IMR-90 (cell line): ENCODE measurements at regions of chr5 and their contacts with region 1.

Region 1: DNA sequence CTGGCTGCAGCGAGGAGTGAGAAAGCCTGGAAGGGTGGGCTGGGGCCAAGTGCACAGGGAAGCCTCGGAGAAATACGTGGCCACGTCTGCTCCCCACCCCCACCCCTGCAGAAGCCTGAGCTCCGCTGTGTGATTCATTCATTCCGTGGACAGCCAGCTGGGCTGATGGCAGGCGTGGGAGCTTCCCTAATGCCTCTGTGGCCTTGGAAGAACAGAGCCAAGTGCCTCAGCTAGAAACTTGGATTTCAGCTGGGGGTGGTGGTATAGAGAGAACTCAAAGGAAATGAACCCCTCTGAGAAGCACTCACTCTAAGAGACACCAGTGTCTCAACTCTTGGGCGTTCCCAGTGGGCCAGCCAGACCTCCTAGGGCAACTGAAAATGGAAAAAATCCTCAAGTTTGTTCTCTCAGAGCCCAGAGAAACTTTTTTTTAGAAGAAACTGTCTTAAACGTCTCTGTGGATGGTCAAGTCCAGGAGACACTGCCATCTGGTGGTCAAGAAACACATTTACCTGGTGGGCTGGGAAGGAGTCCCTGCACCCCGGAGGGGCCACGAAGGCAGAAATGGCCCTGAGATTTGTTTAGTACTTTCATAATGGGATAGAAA is 18.0 kb downstream of the ATOX1 start:
- DNase-seq: peak; percentile 96
- ATAC-seq: peak; percentile 61
- H3K4me3 ChIP-seq: no peak overlapping the region
- H3K27ac ChIP-seq: peak overlapping the region; percentile 100
- H3K4me1 ChIP-seq: peaks cover 23% of the 10 kb centered on the region
- H3K27me3 ChIP-seq: no peaks in the 10 kb centered on the region
- CTCF ChIP-seq: peak; percentile 86
- POLR2A ChIP-seq: peak; percentile 68
- RAD21 ChIP-seq: peak; percentile 81

Region 2: DNA sequence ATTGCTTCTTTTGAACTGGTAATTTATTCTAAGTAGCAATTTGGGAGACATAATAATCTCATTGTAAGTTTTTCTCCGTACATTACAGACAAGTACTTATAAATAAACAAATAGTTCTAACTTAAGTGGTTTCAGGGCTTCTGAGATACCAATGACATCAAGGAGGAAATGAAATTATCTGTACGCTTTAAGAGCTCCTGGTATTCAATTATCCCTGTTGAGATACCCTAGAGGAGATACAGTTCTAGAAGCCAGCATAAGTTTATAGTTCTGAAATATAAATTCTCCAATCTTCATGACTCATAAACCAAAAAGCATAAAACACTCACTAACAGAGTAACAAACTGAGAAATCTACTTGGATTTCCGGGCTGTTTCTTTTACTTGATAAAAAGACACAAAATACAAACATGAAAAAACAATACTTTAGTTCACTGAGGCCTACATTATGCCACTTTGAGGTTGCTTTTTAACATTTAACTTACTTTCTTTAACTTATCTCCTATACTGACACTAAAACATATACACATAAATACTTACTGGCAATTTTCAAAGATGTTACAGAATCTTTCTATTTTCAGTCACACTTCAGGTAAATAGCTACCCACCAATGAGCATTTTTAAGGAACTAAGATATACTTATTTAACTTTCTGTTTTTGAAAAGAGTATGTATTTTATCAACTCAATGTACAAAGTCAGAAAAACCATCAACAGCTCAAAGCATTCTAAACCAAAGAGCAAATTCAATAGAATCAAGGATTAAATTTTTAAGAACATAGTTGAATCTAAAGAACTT is 989.1 kb before region 1 on chr5:
- CTCF ChIA-PET with region 1: no interaction called
- POLR2A ChIA-PET with region 1: no interaction called
- dilution Hi-C with region 1: no loop called
- in situ Hi-C with region 1: no loop called
- intact Hi-C with region 1: no loop called
- DNase-seq: peak; percentile 40
- ATAC-seq: peak; percentile 80
- H3K4me3 ChIP-seq: no peak overlapping the region
- H3K27ac ChIP-seq: peak overlapping the region; percentile 62; the same call in 1 of the 2 replicates
- H3K4me1 ChIP-seq: no peaks in the 10 kb centered on the region; the same call in 1 of the 2 replicates
- H3K27me3 ChIP-seq: no peaks in the 10 kb centered on the region
- CTCF ChIP-seq: no peak
- POLR2A ChIP-seq: no peak
- RAD21 ChIP-seq: no peak

Region 3: GRCh38 chr5:151414536-151414935 is 325.9 kb before region 1 on chr5:
- CTCF ChIA-PET with region 1: no interaction called
- POLR2A ChIA-PET with region 1: no interaction called
- dilution Hi-C with region 1: no loop called
- in situ Hi-C with region 1: no loop called
- intact Hi-C with region 1: no loop called
- DNase-seq: no peak
- ATAC-seq: no peak
- H3K4me3 ChIP-seq: no peak overlapping the region
- H3K27ac ChIP-seq: no peak overlapping the region
- H3K4me1 ChIP-seq: no peaks in the 10 kb centered on the region
- H3K27me3 ChIP-seq: peaks cover 3% of the 10 kb centered on the region; the same call in 1 of the 2 replicates
- CTCF ChIP-seq: no peak
- POLR2A ChIP-seq: no peak
- RAD21 ChIP-seq: no peak

Region 4: GRCh38 chr5:151447174-151448037 is 293.0 kb before region 1 on chr5 and contains the start of gene SLC36A1:
- CTCF ChIA-PET with region 1: no interaction called
- POLR2A ChIA-PET with region 1: no interaction called
- dilution Hi-C with region 1: no loop called
- in situ Hi-C with region 1: loop called (anchors 5 kb)
- intact Hi-C with region 1: loop called (anchors 1 kb)
- DNase-seq: peak; percentile 86
- ATAC-seq: peak; percentile 90
- H3K4me3 ChIP-seq: peak within 1 kb of the TSS; percentile 74
- H3K27ac ChIP-seq: peak within 1 kb of the TSS; percentile 50
- H3K4me1 ChIP-seq: peaks cover 12% of the 10 kb centered on the region
- H3K27me3 ChIP-seq: peaks cover 2% of the 10 kb centered on the region; the same call in 1 of the 2 replicates
- CTCF ChIP-seq: peak; percentile 93
- POLR2A ChIP-seq: peak; percentile 41; the same call in 1 of the 2 replicates
- RAD21 ChIP-seq: peak; percentile 90
- total RNA-seq, gene SLC36A1: 5.3 and 5.7 TPM in 2 replicates

Region 5: DNA sequence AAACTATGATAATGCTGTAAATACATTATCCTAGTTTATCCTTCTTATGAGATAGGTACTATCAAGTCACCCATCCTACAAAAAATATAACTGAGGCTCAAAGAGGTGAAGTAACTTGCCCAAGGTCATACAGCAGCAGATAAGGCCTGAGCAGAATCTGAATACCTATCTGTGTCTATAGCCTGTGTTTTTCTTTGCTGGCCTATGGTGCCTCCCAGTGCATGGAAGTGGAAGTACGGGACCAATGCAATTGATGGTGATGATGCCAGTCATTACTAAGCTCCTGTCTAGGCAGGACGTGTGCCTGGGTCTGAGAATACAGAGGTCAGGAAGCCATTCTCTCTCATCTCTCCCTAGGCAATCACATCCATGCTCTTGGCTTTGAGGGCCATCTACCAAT is 217.1 kb before region 1 on chr5:
- CTCF ChIA-PET with region 1: no interaction called
- POLR2A ChIA-PET with region 1: no interaction called
- dilution Hi-C with region 1: no loop called
- in situ Hi-C with region 1: no loop called
- intact Hi-C with region 1: loop called (anchors 5 kb)
- DNase-seq: peak; percentile 55
- ATAC-seq: peak; percentile 93
- H3K4me3 ChIP-seq: no peak overlapping the region
- H3K27ac ChIP-seq: no peak overlapping the region
- H3K4me1 ChIP-seq: no peaks in the 10 kb centered on the region
- H3K27me3 ChIP-seq: peaks cover 4% of the 10 kb centered on the region; the same call in 1 of the 2 replicates
- CTCF ChIP-seq: peak; percentile 67
- POLR2A ChIP-seq: no peak
- RAD21 ChIP-seq: peak; percentile 81

Region 6: DNA sequence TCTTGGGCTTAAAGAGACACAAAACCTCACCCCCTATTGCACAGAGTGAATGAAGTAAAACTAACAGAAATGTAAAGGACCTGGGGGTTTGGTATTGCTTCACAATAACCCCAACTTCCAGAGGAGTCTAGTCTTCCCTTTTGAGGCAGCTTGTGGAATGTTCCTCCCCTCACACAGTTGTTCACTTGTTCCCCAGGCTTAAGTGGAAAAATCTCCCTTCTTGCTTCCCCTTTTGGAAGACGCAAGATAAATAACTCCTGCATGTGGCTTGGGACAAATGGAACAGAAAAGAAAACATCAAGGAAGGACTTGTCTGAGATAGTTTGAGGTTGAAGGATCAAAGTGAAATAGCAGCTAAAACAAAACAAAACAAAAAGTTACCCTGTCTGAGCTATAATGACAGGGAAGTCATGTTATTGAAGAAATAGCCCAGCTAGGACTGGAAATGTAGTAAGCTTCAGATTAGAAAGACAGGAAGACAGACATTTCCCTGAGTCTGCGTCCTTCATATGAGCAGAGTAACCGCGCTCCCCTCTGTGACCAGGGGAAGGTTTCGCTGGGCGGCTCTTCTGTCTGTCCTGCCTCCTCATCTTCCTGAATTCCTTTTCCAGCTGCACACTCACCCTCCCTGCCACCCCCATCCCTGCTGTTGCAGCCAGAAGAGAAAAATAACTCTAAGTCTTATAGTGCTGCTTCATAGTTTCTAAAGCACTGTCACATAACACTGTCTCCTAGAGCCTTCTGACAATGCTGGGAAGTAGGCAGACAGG is 62.5 kb before region 1 on chr5:
- CTCF ChIA-PET with region 1: interaction called, 36 read pairs
- POLR2A ChIA-PET with region 1: interaction called, 70 read pairs
- dilution Hi-C with region 1: no loop called
- in situ Hi-C with region 1: no loop called
- intact Hi-C with region 1: no loop called
- DNase-seq: peak; percentile 68
- ATAC-seq: peak; percentile 15
- H3K4me3 ChIP-seq: no peak overlapping the region
- H3K27ac ChIP-seq: peak overlapping the region; percentile 79; the same call in 1 of the 2 replicates
- H3K4me1 ChIP-seq: peaks cover 61% of the 10 kb centered on the region
- H3K27me3 ChIP-seq: no peaks in the 10 kb centered on the region
- CTCF ChIP-seq: no peak
- POLR2A ChIP-seq: no peak
- RAD21 ChIP-seq: no peak

Region 7: GRCh38 chr5:151719228-151720000 is 21.0 kb before region 1 on chr5:
- CTCF ChIA-PET with region 1: interaction called, 6 read pairs
- POLR2A ChIA-PET with region 1: interaction called, 4 read pairs
- dilution Hi-C with region 1: no loop called
- in situ Hi-C with region 1: no loop called
- intact Hi-C with region 1: loop called (anchors 1 kb)
- DNase-seq: peak; percentile 50
- ATAC-seq: peak; percentile 56
- H3K4me3 ChIP-seq: no peak overlapping the region
- H3K27ac ChIP-seq: peak overlapping the region; percentile 88
- H3K4me1 ChIP-seq: peaks cover 16% of the 10 kb centered on the region
- H3K27me3 ChIP-seq: no peaks in the 10 kb centered on the region
- CTCF ChIP-seq: peak; percentile 64
- POLR2A ChIP-seq: no peak
- RAD21 ChIP-seq: peak; percentile 68